Activated CD4-positive, alpha-beta T cell treated with anti-CD3 and anti-CD28 coated beads, Interleukin-2, amount 10 ng/mL, durations not matched to agents 7 days and 5 days (primary cell): ENCODE measurements at regions of chr3 and their contacts with region 1.

Region 1: GRCh38 chr3:10055097-10055496 is 28.9 kb downstream of the FANCD2 start:
- DNase-seq: no peak
- H3K4me3 Mint-ChIP-seq: no peak overlapping the region
- H3K27ac Mint-ChIP-seq: no peak overlapping the region
- H3K4me1 Mint-ChIP-seq: no peaks in the 10 kb centered on the region
- H3K27me3 Mint-ChIP-seq: no peaks in the 10 kb centered on the region

Region 2: GRCh38 chr3:10090179-10090578 is 35.1 kb after region 1 on chr3:
- CTCF ChIA-PET with region 1: no interaction called
- POLR2A ChIA-PET with region 1: interaction called, 11 read pairs
- DNase-seq: no peak
- H3K4me3 Mint-ChIP-seq: no peak overlapping the region
- H3K27ac Mint-ChIP-seq: no peak overlapping the region
- H3K4me1 Mint-ChIP-seq: no peaks in the 10 kb centered on the region
- H3K27me3 Mint-ChIP-seq: no peaks in the 10 kb centered on the region